ENCODE measurements at regions of chr15 and their contacts with region 1.

Region 1: GRCh38 chr15:70474471-70475396 is 288.6 kb downstream of the UACA start:
- DNase-seq: peak; percentile 96
- H3K4me3 ChIP-seq: peak overlapping the region in 1 of 3 experiments; percentile 27
- H3K27ac ChIP-seq: peak overlapping the region; percentile 88
- H3K4me1 ChIP-seq: peaks cover 26% of the 10 kb centered on the region
- H3K27me3 ChIP-seq: no peaks in the 10 kb centered on the region
- CTCF ChIP-seq: no peak
- POLR2A ChIP-seq: no peak

Region 2: GRCh38 chr15:69557340-69558137 is 917.2 kb before region 1 on chr15:
- CTCF ChIA-PET with region 1: no interaction called
- POLR2A ChIA-PET with region 1: no interaction called
- dilution Hi-C with region 1: no loop called
- intact Hi-C with region 1: loop called (anchors 1 kb)
- DNase-seq: peak; percentile 92
- H3K4me3 ChIP-seq: no peak overlapping the region
- H3K27ac ChIP-seq: peak overlapping the region; percentile 62
- H3K4me1 ChIP-seq: peaks cover 14% of the 10 kb centered on the region
- H3K27me3 ChIP-seq: no peaks in the 10 kb centered on the region
- CTCF ChIP-seq: no peak
- POLR2A ChIP-seq: no peak

Region 3: GRCh38 chr15:69755551-69756310 is 719.0 kb before region 1 on chr15:
- CTCF ChIA-PET with region 1: no interaction called
- POLR2A ChIA-PET with region 1: no interaction called
- dilution Hi-C with region 1: no loop called
- intact Hi-C with region 1: loop called (anchors 10 kb)
- DNase-seq: no peak
- H3K4me3 ChIP-seq: no peak overlapping the region
- H3K27ac ChIP-seq: no peak overlapping the region
- H3K4me1 ChIP-seq: peaks cover 27% of the 10 kb centered on the region
- H3K27me3 ChIP-seq: no peaks in the 10 kb centered on the region
- CTCF ChIP-seq: no peak
- POLR2A ChIP-seq: no peak

Region 4: GRCh38 chr15:70271422-70272088 is 203.2 kb before region 1 on chr15:
- CTCF ChIA-PET with region 1: no interaction called
- POLR2A ChIA-PET with region 1: no interaction called
- dilution Hi-C with region 1: no loop called
- intact Hi-C with region 1: loop called (anchors 2 kb)
- DNase-seq: peak; percentile 89
- H3K4me3 ChIP-seq: no peak overlapping the region
- H3K27ac ChIP-seq: peak overlapping the region; percentile 80
- H3K4me1 ChIP-seq: peaks cover 36% of the 10 kb centered on the region
- H3K27me3 ChIP-seq: no peaks in the 10 kb centered on the region
- CTCF ChIP-seq: no peak
- POLR2A ChIP-seq: no peak

Region 5: DNA sequence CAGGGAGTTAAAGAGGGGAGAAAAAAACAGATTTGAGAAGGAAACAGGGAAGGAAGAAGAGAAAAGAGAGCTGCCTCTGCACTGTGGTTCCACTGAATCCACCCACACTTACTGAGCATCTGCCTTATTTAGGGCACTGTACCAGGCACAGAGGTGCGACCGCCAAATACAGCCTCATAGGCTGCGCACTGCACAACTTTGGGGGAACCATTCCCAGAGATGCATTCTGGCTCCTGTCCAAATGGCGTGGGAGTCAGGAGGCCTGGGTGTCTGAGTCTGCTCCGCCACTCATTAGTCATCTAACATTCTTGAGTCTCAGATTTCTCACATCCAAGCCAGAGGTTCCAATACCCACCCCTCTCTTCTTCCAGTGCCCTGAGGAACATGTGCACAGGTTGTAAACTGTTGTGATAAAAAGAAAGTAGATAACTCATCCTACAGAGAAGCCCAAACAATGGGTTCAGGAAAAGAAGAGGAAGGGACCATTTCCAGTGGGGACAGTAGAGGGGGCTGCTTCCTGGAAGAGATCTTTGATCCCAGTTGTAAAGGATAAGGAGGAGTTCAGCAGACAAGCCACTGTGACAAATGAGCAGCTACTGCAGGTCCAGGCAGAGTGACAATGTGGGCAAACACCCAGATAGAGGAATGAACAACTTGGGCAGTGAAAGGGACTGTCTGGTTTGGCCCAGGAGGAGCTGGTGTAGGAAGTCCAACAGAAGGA is 34.0 kb after region 1 on chr15:
- CTCF ChIA-PET with region 1: interaction called, 4 read pairs
- POLR2A ChIA-PET with region 1: no interaction called
- dilution Hi-C with region 1: no loop called
- intact Hi-C with region 1: loop called (anchors 1 kb)
- DNase-seq: peak; percentile 54
- H3K4me3 ChIP-seq: no peak overlapping the region
- H3K27ac ChIP-seq: peak overlapping the region; percentile 34
- H3K4me1 ChIP-seq: peaks cover 28% of the 10 kb centered on the region
- H3K27me3 ChIP-seq: no peaks in the 10 kb centered on the region
- CTCF ChIP-seq: no peak
- POLR2A ChIP-seq: no peak